ENCODE measurements at regions of chr16 and their contacts with region 1.

Region 1: DNA sequence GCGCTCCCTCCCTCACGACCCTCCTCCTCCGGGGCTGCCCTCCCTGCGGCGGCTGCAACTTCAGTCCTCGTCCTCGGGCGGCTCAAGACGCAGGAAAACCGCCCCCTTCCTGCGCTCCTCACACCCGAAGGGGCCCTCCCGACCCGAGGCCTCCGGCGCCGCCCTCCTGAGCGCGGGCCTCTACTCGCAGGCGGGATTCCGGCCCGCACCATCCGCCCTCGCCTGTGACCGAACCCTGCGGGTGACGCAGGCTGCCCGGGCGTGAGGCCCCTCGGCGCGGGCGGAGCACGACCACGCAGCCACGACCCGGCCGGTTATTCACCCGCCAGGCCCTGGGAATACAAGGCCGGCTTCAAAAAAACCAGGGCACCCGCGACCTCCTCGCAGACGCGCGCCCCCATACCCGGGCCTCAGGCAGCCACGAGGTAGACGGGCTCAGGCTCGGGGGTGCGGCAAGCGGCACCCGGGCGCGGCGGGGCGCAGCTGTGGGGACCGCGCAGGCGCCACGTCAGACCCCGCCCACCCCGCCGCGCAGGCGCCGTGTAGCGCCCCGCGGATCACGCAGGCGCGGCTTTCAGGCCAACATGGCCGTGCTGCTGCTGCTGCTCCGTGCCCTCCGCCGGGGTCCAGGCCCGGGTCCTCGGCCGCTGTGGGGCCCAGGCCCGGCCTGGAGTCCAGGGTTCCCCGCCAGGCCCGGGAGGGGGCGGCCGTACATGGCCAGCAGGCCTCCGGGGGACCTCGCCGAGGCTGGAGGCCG is at the start of gene SPG7:
- DNase-seq: peak; percentile 95
- total RNA-seq, gene SPG7: 64.1 to 65.2 TPM

Region 2: GRCh38 chr16:89241187-89242007 is 266.6 kb before region 1 on chr16:
- intact Hi-C with region 1: loop called in 1 of 2 experiments (anchors 10 kb)
- DNase-seq: peak; percentile 90

Region 3: GRCh38 chr16:89343501-89344457 is 164.2 kb before region 1 on chr16:
- intact Hi-C with region 1: loop called in 1 of 2 experiments (anchors 10 kb)
- DNase-seq: no peak